Activated CD8-positive, alpha-beta T cell treated with anti-CD3 and anti-CD28 coated beads for 36 hours (primary cell): ENCODE measurements at regions of chr17 and their contacts with region 1.

Region 1: DNA sequence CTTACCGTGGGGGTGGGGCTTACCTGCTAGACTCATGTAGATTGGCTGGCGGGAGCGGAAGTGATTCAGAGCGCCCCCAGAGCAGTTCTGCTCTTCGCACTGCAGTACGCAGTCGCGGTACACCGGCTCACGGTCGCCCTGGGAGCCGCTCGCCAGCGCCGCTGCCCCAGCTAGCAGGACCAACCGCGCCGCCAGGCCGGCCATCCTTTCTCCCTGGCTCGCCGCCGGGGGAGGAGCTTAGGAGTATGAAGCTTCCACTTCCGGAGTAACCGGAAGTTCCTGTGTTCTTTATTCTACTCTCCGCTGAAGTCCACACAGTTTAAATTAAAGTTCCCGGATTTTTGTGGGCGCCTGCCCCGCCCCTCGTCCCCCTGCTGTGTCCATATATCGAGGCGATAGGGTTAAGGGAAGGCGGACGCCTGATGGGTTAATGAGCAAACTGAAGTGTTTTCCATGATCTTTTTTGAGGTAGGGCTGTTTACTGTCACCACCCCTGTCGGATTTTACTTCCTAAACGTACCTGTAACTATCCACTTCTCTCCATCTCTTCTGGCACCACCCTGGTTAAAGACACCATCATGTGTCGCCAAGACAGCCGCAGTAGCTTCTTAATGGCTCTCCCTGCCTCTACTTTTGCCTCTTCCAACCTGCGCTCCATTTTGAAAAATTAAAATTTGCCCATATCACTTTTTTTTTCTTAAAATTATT is at the start of gene PGAP3:
- DNase-seq: peak; percentile 96
- ATAC-seq: peak; percentile 97
- H3K4me3 Mint-ChIP-seq: peak within 1 kb of the TSS; percentile 93
- H3K27ac Mint-ChIP-seq: peak within 1 kb of the TSS; percentile 93
- H3K4me1 Mint-ChIP-seq: peaks cover 20% of the 10 kb centered on the region
- H3K27me3 Mint-ChIP-seq: no peaks in the 10 kb centered on the region
- CTCF ChIP-seq: no peak
- total RNA-seq, gene PGAP3: 6.4 to 7.4 TPM

Region 2: GRCh38 chr17:39676198-39676819 is 11.7 kb before region 1 on chr17:
- CTCF ChIA-PET with region 1: interaction called, 7 read pairs
- POLR2A ChIA-PET with region 1: interaction called, 15 read pairs
- intact Hi-C with region 1: no loop called
- DNase-seq: peak; percentile 76
- ATAC-seq: peak; percentile 78
- H3K4me3 Mint-ChIP-seq: no peak overlapping the region
- H3K27ac Mint-ChIP-seq: peak overlapping the region; percentile 59
- H3K4me1 Mint-ChIP-seq: peaks cover 65% of the 10 kb centered on the region
- H3K27me3 Mint-ChIP-seq: no peaks in the 10 kb centered on the region
- CTCF ChIP-seq: no peak